ENCODE measurements at regions of chr2 and their contacts with region 1.

Region 1: GRCh38 chr2:227132986-227133385 is 31.0 kb downstream of the COL4A4 start:
- DNase-seq: no peak
- ATAC-seq: no peak
- H3K4me3 ChIP-seq: no peak overlapping the region
- H3K27ac ChIP-seq: no peak overlapping the region
- H3K4me1 ChIP-seq: no peaks in the 10 kb centered on the region
- H3K27me3 ChIP-seq: peaks cover 0 to 19% of the 10 kb centered on the region in 2 experiments; a peak in 2 of 5 replicates
- CTCF ChIP-seq: no peak
- EP300 ChIP-seq: no peak
- POLR2A ChIP-seq: no peak
- RAD21 ChIP-seq: no peak

Region 2: GRCh38 chr2:227177592-227178336 is 44.8 kb after region 1 on chr2:
- CTCF ChIA-PET with region 1: no interaction called
- POLR2A ChIA-PET with region 1: no interaction called
- in situ Hi-C with region 1: no loop called
- intact Hi-C with region 1: no loop called
- DNase-seq: no peak
- ATAC-seq: no peak
- H3K4me3 ChIP-seq: no peak overlapping the region
- H3K27ac ChIP-seq: no peak overlapping the region
- H3K4me1 ChIP-seq: no peaks in the 10 kb centered on the region
- H3K27me3 ChIP-seq: no peaks in the 10 kb centered on the region
- CTCF ChIP-seq: no peak
- EP300 ChIP-seq: no peak
- POLR2A ChIP-seq: no peak
- RAD21 ChIP-seq: no peak

Region 3: DNA sequence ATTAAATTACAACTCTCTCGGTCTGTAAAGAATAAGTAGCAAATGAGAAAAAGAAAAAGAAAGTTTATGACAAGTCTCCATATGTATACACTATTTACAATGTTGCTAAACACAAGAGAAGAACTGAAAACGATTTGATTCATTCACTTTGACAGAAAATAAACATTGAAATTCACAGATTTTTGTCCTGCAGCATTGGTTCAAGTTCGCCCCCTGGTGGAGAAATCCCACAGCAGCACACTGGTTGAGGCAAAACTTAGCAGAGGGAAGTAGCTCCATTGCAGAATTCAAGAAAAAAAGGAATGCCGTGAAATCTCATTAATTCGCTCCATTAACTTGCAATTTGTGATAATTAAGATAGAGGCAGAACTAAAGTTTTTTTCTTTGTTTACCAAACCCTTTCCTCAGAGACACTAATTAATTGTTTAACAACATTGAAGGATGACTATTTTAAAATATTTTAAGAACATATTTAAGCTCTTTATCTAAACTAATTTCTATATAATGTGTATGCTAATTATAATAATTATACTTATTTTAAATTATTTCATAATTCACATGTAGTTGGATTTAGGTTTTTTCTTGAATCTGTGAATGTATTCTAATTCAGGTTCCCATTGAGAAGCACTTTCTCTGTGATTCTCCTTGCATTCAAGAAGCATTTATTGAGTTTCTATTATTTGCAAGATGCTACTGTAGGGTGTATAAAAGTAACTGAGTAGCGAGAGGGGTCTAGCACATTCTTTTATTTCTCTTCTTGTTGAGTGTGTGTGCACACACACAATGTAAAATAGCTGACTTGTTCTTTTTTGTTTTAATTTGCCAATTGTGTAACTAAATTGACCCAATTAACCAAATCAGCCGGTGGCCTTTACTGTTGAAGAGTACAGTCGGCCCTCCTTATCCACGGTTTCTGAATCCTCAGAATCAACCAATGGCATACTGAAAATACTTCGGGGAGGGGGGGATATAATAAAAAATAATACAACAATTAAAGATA is 105.6 kb after region 1 on chr2:
- CTCF ChIA-PET with region 1: no interaction called
- POLR2A ChIA-PET with region 1: no interaction called
- in situ Hi-C with region 1: no loop called
- intact Hi-C with region 1: loop called (anchors 1 kb)
- DNase-seq: peak; percentile 39 to 55 (median 48)
- ATAC-seq: peak; percentile 75
- H3K4me3 ChIP-seq: no peak overlapping the region
- H3K27ac ChIP-seq: no peak overlapping the region
- H3K4me1 ChIP-seq: no peaks in the 10 kb centered on the region
- H3K27me3 ChIP-seq: no peaks in the 10 kb centered on the region
- CTCF ChIP-seq: peak; percentile 58 to 77 (median 77)
- EP300 ChIP-seq: no peak
- POLR2A ChIP-seq: no peak
- RAD21 ChIP-seq: peak; percentile 32 to 66

Region 4: GRCh38 chr2:227324995-227325838 is 192.2 kb after region 1 on chr2 and contains the start of gene MFF:
- CTCF ChIA-PET with region 1: no interaction called
- POLR2A ChIA-PET with region 1: no interaction called
- in situ Hi-C with region 1: no loop called
- intact Hi-C with region 1: loop called (anchors 10 kb)
- DNase-seq: peak; percentile 81 to 94 (median 84)
- ATAC-seq: peak; percentile 94
- H3K4me3 ChIP-seq: peak within 1 kb of the TSS; percentile 76
- H3K27ac ChIP-seq: peak within 1 kb of the TSS; percentile 78
- H3K4me1 ChIP-seq: peaks cover 7 to 10% of the 10 kb centered on the region in 2 experiments; a peak in 3 of 5 replicates
- H3K27me3 ChIP-seq: no peaks in the 10 kb centered on the region
- CTCF ChIP-seq: peak; percentile 35 to 49 (median 36); a peak in 4 of 6 replicates
- EP300 ChIP-seq: 0 out of 2 replicates have a peak, but pooled peaks have one; percentile 4
- POLR2A ChIP-seq: peak; percentile 78
- RAD21 ChIP-seq: peak; percentile 14 to 22; a peak in 1 of 4 replicates
- polyA plus RNA-seq, gene MFF: 9.4 to 12.6 TPM

Measured in K562 (cell line).